T-cell (primary cell): ENCODE measurements at regions of chr1 and their contacts with region 1.

Region 1: DNA sequence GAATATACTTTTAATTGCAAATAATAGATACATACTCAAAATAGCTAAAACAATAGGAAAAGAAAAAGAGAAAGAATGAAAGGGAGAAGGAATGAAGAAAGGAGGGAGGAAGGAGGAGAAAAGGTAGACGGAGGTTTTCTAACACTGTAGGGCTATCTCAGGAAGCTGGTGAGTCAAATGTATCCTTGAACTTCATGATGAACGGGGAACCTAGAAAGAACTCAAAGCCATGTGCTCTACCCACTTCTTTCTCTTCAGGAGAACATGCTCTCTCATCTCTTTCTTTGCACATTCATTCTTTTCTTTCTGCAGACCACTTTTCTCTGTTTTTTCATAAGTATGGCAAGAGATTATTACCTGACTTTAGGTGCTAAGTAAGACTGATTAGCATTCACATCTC is 37.3 kb upstream of the ZNF644 start:
- DNase-seq: no peak
- ATAC-seq: no peak
- H3K4me3 ChIP-seq: no peak overlapping the region
- H3K4me3 Mint-ChIP-seq: no peak overlapping the region
- H3K27ac ChIP-seq: no peak overlapping the region
- H3K27ac Mint-ChIP-seq: peak overlapping the region in 1 of 2 donors; percentile 44
- H3K4me1 ChIP-seq: peaks cover 0 to 8% of the 10 kb centered on the region in 2 experiments
- H3K4me1 Mint-ChIP-seq: no peaks in the 10 kb centered on the region
- H3K27me3 ChIP-seq: peaks cover 0 to 4% of the 10 kb centered on the region in 2 experiments
- H3K27me3 Mint-ChIP-seq: peaks cover 6 to 20% of the 10 kb centered on the region in 2 donors

Region 2: GRCh38 chr1:90964444-90965035 is 94.6 kb before region 1 on chr1:
- CTCF ChIA-PET with region 1: interaction called in 1 of 2 experiments, 15 read pairs
- POLR2A ChIA-PET with region 1: no interaction called
- DNase-seq: peak in 1 of 35 experiments; percentile 31
- ATAC-seq: no peak
- H3K4me3 ChIP-seq: no peak overlapping the region
- H3K4me3 Mint-ChIP-seq: no peak overlapping the region
- H3K27ac ChIP-seq: no peak overlapping the region
- H3K27ac Mint-ChIP-seq: peak overlapping the region in 1 of 2 donors; percentile 40
- H3K4me1 ChIP-seq: no peaks in the 10 kb centered on the region
- H3K4me1 Mint-ChIP-seq: peaks cover 50 to 61% (median 61%) of the 10 kb centered on the region in 3 donors
- H3K27me3 ChIP-seq: no peaks in the 10 kb centered on the region
- H3K27me3 Mint-ChIP-seq: no peaks in the 10 kb centered on the region

Region 3: GRCh38 chr1:91080650-91081049 is 21.5 kb after region 1 on chr1:
- CTCF ChIA-PET with region 1: no interaction called
- POLR2A ChIA-PET with region 1: no interaction called
- DNase-seq: no peak
- ATAC-seq: no peak
- H3K4me3 ChIP-seq: no peak overlapping the region
- H3K4me3 Mint-ChIP-seq: no peak overlapping the region
- H3K27ac ChIP-seq: no peak overlapping the region
- H3K27ac Mint-ChIP-seq: no peak overlapping the region
- H3K4me1 ChIP-seq: no peaks in the 10 kb centered on the region
- H3K4me1 Mint-ChIP-seq: no peaks in the 10 kb centered on the region
- H3K27me3 ChIP-seq: no peaks in the 10 kb centered on the region
- H3K27me3 Mint-ChIP-seq: peaks cover 0 to 9% of the 10 kb centered on the region in 2 donors